Breast epithelium (tissue), 4 donors: ENCODE measurements at regions of chr5 and their contacts with region 1.

Region 1: DNA sequence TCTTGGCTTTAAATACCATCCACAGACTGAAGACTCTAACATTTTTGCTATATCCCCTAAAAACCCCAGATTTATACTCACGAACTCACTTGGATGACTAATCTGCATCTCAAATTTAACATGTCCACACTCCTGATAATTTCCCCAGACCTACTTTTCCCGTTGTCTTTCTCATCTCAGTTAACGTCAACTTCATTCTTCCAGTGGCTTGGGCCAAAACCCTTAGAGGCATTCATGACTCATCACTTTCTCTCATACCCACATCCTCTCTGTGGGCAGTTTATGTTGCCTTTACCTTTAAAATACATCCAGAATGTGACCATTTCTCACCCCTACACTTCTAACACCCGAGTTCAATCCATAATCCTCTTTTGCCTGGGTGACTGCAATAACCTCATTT is 96.7 kb downstream of the EDIL3 start:
- DNase-seq: no peak
- H3K4me3 ChIP-seq: no peak overlapping the region
- H3K27ac ChIP-seq: no peak overlapping the region
- H3K4me1 ChIP-seq: no peaks in the 10 kb centered on the region
- H3K27me3 ChIP-seq: no peaks in the 10 kb centered on the region
- CTCF ChIP-seq: no peak
- POLR2A ChIP-seq: no peak

Region 2: DNA sequence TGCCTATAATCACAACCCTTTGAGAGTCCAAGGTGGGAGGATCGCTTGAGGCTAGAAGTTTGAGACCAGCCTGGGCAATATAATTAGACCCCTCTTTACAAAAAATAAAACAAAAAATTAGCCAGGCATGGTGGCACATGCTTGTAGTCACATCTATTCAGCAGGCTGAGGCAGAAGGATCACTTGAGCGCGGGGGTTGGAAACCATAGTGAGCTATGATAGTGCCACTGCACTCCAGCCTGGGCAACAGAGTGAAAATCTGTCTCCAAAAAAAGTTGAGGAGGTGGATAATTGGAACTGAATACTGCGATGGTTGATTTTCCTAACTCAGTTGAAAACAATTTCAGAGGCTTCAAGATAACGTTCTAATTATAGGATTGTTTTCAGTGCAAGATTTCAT is 44.2 kb after region 1 on chr5:
- intact Hi-C with region 1: loop called (anchors 2 kb)
- DNase-seq: no peak
- H3K4me3 ChIP-seq: no peak overlapping the region
- H3K27ac ChIP-seq: no peak overlapping the region
- H3K4me1 ChIP-seq: no peaks in the 10 kb centered on the region
- H3K27me3 ChIP-seq: no peaks in the 10 kb centered on the region
- CTCF ChIP-seq: no peak
- POLR2A ChIP-seq: no peak

Region 3: GRCh38 chr5:84696651-84697050 is 408.7 kb after region 1 on chr5:
- intact Hi-C with region 1: loop called (anchors 10 kb)
- DNase-seq: no peak
- H3K4me3 ChIP-seq: no peak overlapping the region
- H3K27ac ChIP-seq: no peak overlapping the region
- H3K4me1 ChIP-seq: no peaks in the 10 kb centered on the region
- H3K27me3 ChIP-seq: no peaks in the 10 kb centered on the region
- CTCF ChIP-seq: no peak
- POLR2A ChIP-seq: no peak